ENCODE measurements at regions of chr2 and their contacts with region 1.

Region 1: GRCh38 chr2:78127424-78127823 is 605.2 kb upstream of the LRRTM4 start:
- DNase-seq: no peak
- ATAC-seq: no peak
- H3K4me3 ChIP-seq: no peak overlapping the region
- H3K27ac ChIP-seq: no peak overlapping the region
- H3K4me1 ChIP-seq: no peaks in the 10 kb centered on the region
- H3K27me3 ChIP-seq: no peaks in the 10 kb centered on the region
- CTCF ChIP-seq: no peak
- EP300 ChIP-seq: no peak
- POLR2A ChIP-seq: no peak
- RAD21 ChIP-seq: no peak

Region 2: GRCh38 chr2:78147466-78147865 is 20.0 kb after region 1 on chr2:
- CTCF ChIA-PET with region 1: no interaction called
- POLR2A ChIA-PET with region 1: no interaction called
- in situ Hi-C with region 1: no loop called
- intact Hi-C with region 1: loop called (anchors 1 kb)
- DNase-seq: no peak
- ATAC-seq: peak; percentile 29; the same call in 2 of the 3 replicates
- H3K4me3 ChIP-seq: no peak overlapping the region
- H3K27ac ChIP-seq: no peak overlapping the region
- H3K4me1 ChIP-seq: no peaks in the 10 kb centered on the region
- H3K27me3 ChIP-seq: no peaks in the 10 kb centered on the region
- CTCF ChIP-seq: no peak
- EP300 ChIP-seq: no peak
- POLR2A ChIP-seq: no peak
- RAD21 ChIP-seq: no peak

Region 3: GRCh38 chr2:78418021-78418420 is 290.6 kb after region 1 on chr2:
- CTCF ChIA-PET with region 1: no interaction called
- POLR2A ChIA-PET with region 1: no interaction called
- in situ Hi-C with region 1: no loop called
- intact Hi-C with region 1: no loop called
- DNase-seq: no peak
- ATAC-seq: no peak
- H3K4me3 ChIP-seq: no peak overlapping the region
- H3K27ac ChIP-seq: no peak overlapping the region
- H3K4me1 ChIP-seq: peaks cover 20% of the 10 kb centered on the region
- H3K27me3 ChIP-seq: no peaks in the 10 kb centered on the region
- CTCF ChIP-seq: no peak
- EP300 ChIP-seq: no peak
- POLR2A ChIP-seq: no peak
- RAD21 ChIP-seq: no peak